A549 (cell line): ENCODE measurements at regions of chr12 and their contacts with region 1.

Region 1: GRCh38 chr12:12327802-12328201 is 22.2 kb downstream of the MANSC1 start:
- DNase-seq: peak; percentile 55 to 82
- ATAC-seq: peak; percentile 61 to 68; a peak in 4 of 6 replicates
- H3K4me3 ChIP-seq: no peak overlapping the region
- H3K27ac ChIP-seq: peak overlapping the region; percentile 15 to 63; a peak in 4 of 6 replicates
- H3K4me1 ChIP-seq: peaks cover 5% of the 10 kb centered on the region
- CTCF ChIP-seq: peak; percentile 92
- EP300 ChIP-seq: no peak
- POLR2A ChIP-seq: no peak
- RAD21 ChIP-seq: peak; percentile 90 to 96

Region 2: GRCh38 chr12:12091977-12092663 is 235.7 kb before region 1 on chr12:
- CTCF ChIA-PET with region 1: interaction called, 214 read pairs
- POLR2A ChIA-PET with region 1: no interaction called
- DNase-seq: no peak
- ATAC-seq: peak; percentile 57 to 59; a peak in 5 of 6 replicates
- H3K4me3 ChIP-seq: no peak overlapping the region
- H3K27ac ChIP-seq: peak overlapping the region in 1 of 2 experiments; percentile 29; a peak in 2 of 6 replicates
- H3K4me1 ChIP-seq: peaks cover 13% of the 10 kb centered on the region
- CTCF ChIP-seq: no peak
- EP300 ChIP-seq: no peak
- POLR2A ChIP-seq: no peak
- RAD21 ChIP-seq: no peak

Region 3: GRCh38 chr12:12254553-12254952 is 73.2 kb before region 1 on chr12:
- CTCF ChIA-PET with region 1: interaction called, 10 read pairs
- POLR2A ChIA-PET with region 1: no interaction called
- DNase-seq: no peak
- ATAC-seq: no peak
- H3K4me3 ChIP-seq: no peak overlapping the region
- H3K27ac ChIP-seq: no peak overlapping the region
- H3K4me1 ChIP-seq: peaks cover 35% of the 10 kb centered on the region
- CTCF ChIP-seq: no peak
- EP300 ChIP-seq: no peak
- POLR2A ChIP-seq: no peak
- RAD21 ChIP-seq: no peak

Region 4: GRCh38 chr12:12349711-12350665 is 22.2 kb after region 1 on chr12 and contains the start of gene MANSC1:
- CTCF ChIA-PET with region 1: interaction called, 10 read pairs
- POLR2A ChIA-PET with region 1: no interaction called
- DNase-seq: peak; percentile 58
- ATAC-seq: peak; percentile 93 to 96
- H3K4me3 ChIP-seq: peak within 1 kb of the TSS; percentile 70
- H3K27ac ChIP-seq: peak within 1 kb of the TSS; percentile 82 to 95
- H3K4me1 ChIP-seq: peaks cover 19% of the 10 kb centered on the region
- CTCF ChIP-seq: no peak
- EP300 ChIP-seq: no peak
- POLR2A ChIP-seq: peak; percentile 37
- RAD21 ChIP-seq: 0 out of 5 replicates have a peak, but pooled peaks of 1 of the 2 experiments have one; percentile 7
- polyA plus RNA-seq, gene MANSC1: 3.9 and 9.7 TPM in 2 replicates